ENCODE measurements at regions of chr9 and their contacts with region 1.

Region 1: GRCh38 chr9:130265431-130266235 is at the start of gene HMCN2:
- DNase-seq: peak; percentile 92
- total RNA-seq, gene HMCN2: 98.8 to 224 TPM

Region 2: DNA sequence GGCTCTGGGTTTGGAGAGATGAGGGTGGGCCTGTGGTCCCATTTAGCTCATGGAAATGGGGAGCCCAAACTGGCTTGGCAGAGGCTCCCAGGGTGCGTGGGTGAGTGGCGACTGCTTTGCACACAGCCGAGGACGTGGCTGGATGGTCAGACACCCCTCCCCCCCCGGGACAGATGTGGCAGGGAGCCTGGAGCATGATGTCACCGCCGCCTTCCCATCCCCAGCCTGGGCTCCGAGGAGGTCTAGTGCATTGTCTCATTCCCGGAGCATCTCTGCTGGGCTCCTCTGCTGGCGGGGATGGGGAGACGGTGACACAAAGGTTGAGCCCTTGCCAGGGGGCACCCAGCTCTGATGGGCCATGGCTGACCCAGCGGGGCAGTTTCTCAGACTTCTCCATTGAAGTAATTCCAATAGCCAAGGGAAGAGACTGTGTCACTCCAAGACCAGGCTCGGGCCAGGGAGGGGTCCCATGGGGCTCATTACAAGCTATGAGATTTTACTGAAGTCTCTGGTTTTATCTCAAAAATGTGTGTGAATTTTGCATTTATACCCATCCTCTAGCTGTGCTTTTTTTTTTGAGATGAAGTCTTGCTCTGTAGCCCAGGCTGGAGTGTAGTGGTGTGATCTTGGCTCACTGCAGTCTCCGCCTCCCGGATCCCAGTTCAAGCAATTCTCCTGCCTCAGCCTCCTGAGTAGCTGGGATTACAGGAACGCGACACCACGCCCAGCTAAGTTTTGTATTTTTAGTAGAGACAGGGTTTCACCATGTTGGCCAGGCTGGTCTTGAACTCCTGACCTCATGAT is 36.1 kb after region 1 on chr9:
- intact Hi-C with region 1: loop called in 1 of 2 experiments (anchors 5 kb)
- DNase-seq: peak; percentile 96

Region 3: GRCh38 chr9:130313103-130313858 is 47.6 kb after region 1 on chr9:
- intact Hi-C with region 1: no loop called
- DNase-seq: no peak